GM12878 (cell line): ENCODE measurements at regions of chr11 and their contacts with region 1.

Region 1: DNA sequence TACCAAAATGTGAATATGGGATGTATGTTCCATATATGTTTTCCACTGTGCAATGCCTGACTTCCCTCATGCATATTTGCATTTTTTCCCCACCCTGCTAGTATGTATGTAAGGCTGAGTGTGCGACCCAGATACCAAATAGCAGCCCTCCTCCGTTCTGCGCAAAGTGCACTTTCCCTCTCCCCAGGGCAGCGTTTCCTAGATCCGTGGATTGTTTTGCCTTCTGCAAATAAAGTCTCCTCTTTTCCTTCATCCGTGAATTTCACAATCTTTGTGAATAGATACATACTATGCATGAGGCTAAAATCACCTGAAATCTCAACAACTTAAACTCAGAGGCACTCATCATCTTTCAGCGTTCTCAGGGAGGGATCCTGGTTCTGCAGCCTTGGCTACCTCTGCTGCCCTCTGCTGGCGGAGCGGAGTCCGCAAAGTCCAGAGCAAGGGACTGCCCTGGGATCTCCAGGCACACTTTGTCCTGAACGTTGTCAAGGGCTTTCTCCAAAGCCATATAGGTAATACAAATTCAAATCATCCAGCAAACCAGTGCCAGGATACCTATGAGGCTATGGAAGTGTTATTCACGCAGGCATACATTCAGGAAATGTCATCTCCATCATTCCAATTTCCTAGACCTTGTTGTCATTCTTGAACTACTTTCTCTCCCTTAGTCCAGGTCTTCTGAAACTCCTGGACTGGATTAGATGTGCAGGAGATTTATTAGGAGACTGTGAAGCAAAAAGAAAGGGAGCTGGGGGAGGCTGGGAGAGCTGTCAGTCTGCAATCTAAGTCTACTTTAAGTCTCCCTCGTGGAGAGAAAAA is 53.1 kb downstream of the CNTF start:
- DNase-seq: no peak
- ATAC-seq: peak; percentile 100
- H3K4me3 ChIP-seq: no peak overlapping the region
- H3K27ac ChIP-seq: no peak overlapping the region
- H3K4me1 ChIP-seq: no peaks in the 10 kb centered on the region
- H3K27me3 ChIP-seq: no peaks in the 10 kb centered on the region
- CTCF ChIP-seq: peak; percentile 91 to 97 (median 97)
- EP300 ChIP-seq: no peak
- POLR2A ChIP-seq: no peak
- RAD21 ChIP-seq: peak; percentile 83

Region 2: DNA sequence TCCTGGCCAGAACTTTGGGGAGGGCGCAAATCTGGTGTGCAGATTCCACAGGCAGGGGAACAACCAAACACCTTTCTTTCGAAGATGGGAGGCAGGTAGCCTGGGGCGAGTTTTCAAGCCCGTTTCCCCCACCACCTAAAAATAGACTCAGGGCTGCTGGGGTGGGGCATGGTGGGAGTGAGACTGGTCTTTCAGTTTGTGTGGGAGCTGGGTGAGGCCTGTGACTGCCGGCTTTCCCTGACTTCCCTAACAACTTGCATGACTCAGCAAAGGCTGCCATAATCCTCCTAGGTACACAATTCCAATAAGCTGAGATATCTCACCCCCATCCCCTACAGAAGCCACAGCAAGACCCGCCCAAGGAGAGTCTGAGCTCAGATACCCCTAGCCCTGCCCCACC is 229.3 kb before region 1 on chr11:
- CTCF ChIA-PET with region 1: no interaction called
- POLR2A ChIA-PET with region 1: no interaction called
- RAD21 ChIA-PET with region 1: no interaction called
- SMC1A ChIA-PET with region 1: no interaction called
- in situ Hi-C with region 1: no loop called
- intact Hi-C with region 1: no loop called
- DNase-seq: no peak
- ATAC-seq: no peak
- H3K4me3 ChIP-seq: no peak overlapping the region
- H3K27ac ChIP-seq: no peak overlapping the region
- H3K4me1 ChIP-seq: no peaks in the 10 kb centered on the region
- H3K27me3 ChIP-seq: no peaks in the 10 kb centered on the region
- CTCF ChIP-seq: no peak
- EP300 ChIP-seq: no peak
- POLR2A ChIP-seq: no peak
- RAD21 ChIP-seq: no peak

Region 3: GRCh38 chr11:58647141-58647699 is 28.3 kb before region 1 on chr11:
- CTCF ChIA-PET with region 1: interaction called, 49 read pairs
- POLR2A ChIA-PET with region 1: no interaction called
- RAD21 ChIA-PET with region 1: interaction called, 18 read pairs
- SMC1A ChIA-PET with region 1: interaction called, 12 read pairs
- in situ Hi-C with region 1: no loop called
- intact Hi-C with region 1: loop called (anchors 2 kb)
- DNase-seq: peak; percentile 48
- ATAC-seq: peak; percentile 93
- H3K4me3 ChIP-seq: no peak overlapping the region
- H3K27ac ChIP-seq: peak overlapping the region; percentile 40; the same call in 1 of the 2 replicates
- H3K4me1 ChIP-seq: peaks cover 10% of the 10 kb centered on the region
- H3K27me3 ChIP-seq: no peaks in the 10 kb centered on the region
- CTCF ChIP-seq: peak in 2 of 3 experiments; percentile 21 to 40; a peak in 3 of 6 replicates
- EP300 ChIP-seq: peak; percentile 66 to 72; a peak in 2 of 4 replicates
- POLR2A ChIP-seq: no peak
- RAD21 ChIP-seq: peak; percentile 57; the same call in 1 of the 2 replicates

Region 4: GRCh38 chr11:58654079-58654907 is 21.3 kb before region 1 on chr11:
- CTCF ChIA-PET with region 1: interaction called, 49 read pairs
- POLR2A ChIA-PET with region 1: no interaction called
- RAD21 ChIA-PET with region 1: interaction called, 7 read pairs
- SMC1A ChIA-PET with region 1: interaction called, 11 read pairs
- in situ Hi-C with region 1: no loop called
- intact Hi-C with region 1: loop called (anchors 1 kb)
- DNase-seq: peak; percentile 38
- ATAC-seq: peak; percentile 98
- H3K4me3 ChIP-seq: no peak overlapping the region
- H3K27ac ChIP-seq: no peak overlapping the region
- H3K4me1 ChIP-seq: peaks cover 4% of the 10 kb centered on the region; the same call in 1 of the 2 replicates
- H3K27me3 ChIP-seq: no peaks in the 10 kb centered on the region
- CTCF ChIP-seq: peak; percentile 89 to 90 (median 89)
- EP300 ChIP-seq: no peak
- POLR2A ChIP-seq: no peak
- RAD21 ChIP-seq: peak; percentile 76

Region 5: DNA sequence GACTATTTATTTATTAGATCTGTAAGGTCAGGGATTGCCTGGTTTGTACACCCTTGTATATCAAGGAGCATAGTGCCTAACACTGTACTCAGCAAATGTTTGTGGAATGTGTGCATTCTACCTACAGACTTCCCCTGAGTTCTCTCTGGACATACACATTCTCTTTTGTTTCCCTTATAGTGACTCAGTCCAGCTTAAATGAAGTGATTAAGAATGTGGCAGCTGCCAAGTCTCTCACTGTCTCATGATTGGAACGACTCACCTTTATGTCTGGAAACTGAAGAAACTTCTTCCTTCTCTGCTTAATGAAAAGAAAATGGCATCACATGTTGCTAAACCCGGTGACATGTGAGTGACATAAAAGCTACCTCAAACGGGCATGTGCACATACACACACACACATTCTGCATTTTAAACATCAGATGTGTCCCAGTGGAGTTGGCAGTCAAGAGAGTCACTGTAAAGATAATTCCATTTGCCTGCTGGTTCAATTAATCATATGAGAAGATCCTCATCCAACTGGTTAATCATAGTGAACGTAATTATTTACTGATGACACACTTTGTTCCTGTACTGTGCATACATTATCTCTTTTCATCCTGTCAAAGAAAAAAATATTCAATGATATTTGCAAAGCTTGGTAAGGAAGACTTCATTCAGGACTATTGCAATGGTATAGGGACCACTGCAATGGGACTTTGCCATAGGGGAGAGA is 13.4 kb after region 1 on chr11:
- CTCF ChIA-PET with region 1: interaction called, 10 read pairs
- POLR2A ChIA-PET with region 1: no interaction called
- RAD21 ChIA-PET with region 1: no interaction called
- SMC1A ChIA-PET with region 1: interaction called, 3 read pairs
- in situ Hi-C with region 1: no loop called
- intact Hi-C with region 1: no loop called
- DNase-seq: no peak
- ATAC-seq: no peak
- H3K4me3 ChIP-seq: no peak overlapping the region
- H3K27ac ChIP-seq: no peak overlapping the region
- H3K4me1 ChIP-seq: no peaks in the 10 kb centered on the region
- H3K27me3 ChIP-seq: no peaks in the 10 kb centered on the region; a peak in 2 of 4 replicates
- CTCF ChIP-seq: no peak
- EP300 ChIP-seq: no peak
- POLR2A ChIP-seq: no peak
- RAD21 ChIP-seq: no peak

Region 6: GRCh38 chr11:58788355-58789023 is 112.9 kb after region 1 on chr11:
- CTCF ChIA-PET with region 1: interaction called, 8 read pairs
- POLR2A ChIA-PET with region 1: no interaction called
- RAD21 ChIA-PET with region 1: interaction called, 5 read pairs
- SMC1A ChIA-PET with region 1: no interaction called
- in situ Hi-C with region 1: no loop called
- intact Hi-C with region 1: loop called (anchors 1 kb)
- DNase-seq: peak; percentile 7
- ATAC-seq: peak; percentile 98
- H3K4me3 ChIP-seq: no peak overlapping the region
- H3K27ac ChIP-seq: no peak overlapping the region
- H3K4me1 ChIP-seq: no peaks in the 10 kb centered on the region
- H3K27me3 ChIP-seq: no peaks in the 10 kb centered on the region; a peak in 1 of 4 replicates
- CTCF ChIP-seq: peak; percentile 88 to 94 (median 88); a peak in 5 of 6 replicates
- EP300 ChIP-seq: no peak
- POLR2A ChIP-seq: no peak
- RAD21 ChIP-seq: peak; percentile 94

Region 7: GRCh38 chr11:58829786-58830185 is 154.2 kb after region 1 on chr11:
- CTCF ChIA-PET with region 1: no interaction called
- POLR2A ChIA-PET with region 1: no interaction called
- RAD21 ChIA-PET with region 1: no interaction called
- SMC1A ChIA-PET with region 1: no interaction called
- in situ Hi-C with region 1: no loop called
- intact Hi-C with region 1: no loop called
- DNase-seq: no peak
- ATAC-seq: no peak
- H3K4me3 ChIP-seq: no peak overlapping the region
- H3K27ac ChIP-seq: no peak overlapping the region
- H3K4me1 ChIP-seq: no peaks in the 10 kb centered on the region
- H3K27me3 ChIP-seq: no peaks in the 10 kb centered on the region
- CTCF ChIP-seq: no peak
- EP300 ChIP-seq: no peak
- POLR2A ChIP-seq: no peak
- RAD21 ChIP-seq: no peak